T-cell (primary cell): ENCODE measurements at regions of chrX and their contacts with region 1.

Region 1: GRCh38 chrX:19659925-19660324 is 144.6 kb upstream of the MAP3K15 start:
- DNase-seq: no peak
- ATAC-seq: no peak
- H3K4me3 ChIP-seq: no peak overlapping the region
- H3K4me3 Mint-ChIP-seq: no peak overlapping the region
- H3K27ac ChIP-seq: no peak overlapping the region
- H3K27ac Mint-ChIP-seq: peak overlapping the region in 1 of 2 donors; percentile 46
- H3K4me1 ChIP-seq: peaks cover 0 to 6% of the 10 kb centered on the region in 2 experiments
- H3K4me1 Mint-ChIP-seq: peaks cover 26 to 56% (median 35%) of the 10 kb centered on the region in 3 donors
- H3K27me3 ChIP-seq: no peaks in the 10 kb centered on the region
- H3K27me3 Mint-ChIP-seq: no peaks in the 10 kb centered on the region

Region 2: DNA sequence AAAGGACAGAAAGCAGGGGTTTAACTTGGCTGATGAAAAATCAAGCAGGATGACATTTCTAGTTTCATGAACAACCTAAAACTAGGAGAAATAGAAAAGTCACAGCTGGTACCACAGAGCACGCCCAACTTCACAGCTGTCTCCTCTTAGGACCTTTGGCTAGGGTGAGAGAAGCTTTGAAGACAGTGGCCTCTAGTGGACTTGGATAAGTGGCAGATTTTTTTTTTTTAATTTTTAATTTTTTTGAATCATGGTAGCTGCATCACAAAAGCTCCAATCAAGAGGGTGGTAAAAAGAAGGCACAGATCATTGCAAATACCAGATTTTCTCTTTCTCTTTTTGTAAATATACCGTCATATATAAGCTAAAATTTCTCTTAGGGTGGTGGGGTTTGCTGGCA is 124.4 kb before region 1 on chrX:
- CTCF ChIA-PET with region 1: no interaction called
- POLR2A ChIA-PET with region 1: interaction called in 1 of 2 experiments, 28 read pairs
- DNase-seq: no peak
- ATAC-seq: no peak
- H3K4me3 ChIP-seq: no peak overlapping the region
- H3K4me3 Mint-ChIP-seq: no peak overlapping the region
- H3K27ac ChIP-seq: no peak overlapping the region
- H3K27ac Mint-ChIP-seq: no peak overlapping the region
- H3K4me1 ChIP-seq: no peaks in the 10 kb centered on the region
- H3K4me1 Mint-ChIP-seq: no peaks in the 10 kb centered on the region
- H3K27me3 ChIP-seq: no peaks in the 10 kb centered on the region
- H3K27me3 Mint-ChIP-seq: no peaks in the 10 kb centered on the region

Region 3: DNA sequence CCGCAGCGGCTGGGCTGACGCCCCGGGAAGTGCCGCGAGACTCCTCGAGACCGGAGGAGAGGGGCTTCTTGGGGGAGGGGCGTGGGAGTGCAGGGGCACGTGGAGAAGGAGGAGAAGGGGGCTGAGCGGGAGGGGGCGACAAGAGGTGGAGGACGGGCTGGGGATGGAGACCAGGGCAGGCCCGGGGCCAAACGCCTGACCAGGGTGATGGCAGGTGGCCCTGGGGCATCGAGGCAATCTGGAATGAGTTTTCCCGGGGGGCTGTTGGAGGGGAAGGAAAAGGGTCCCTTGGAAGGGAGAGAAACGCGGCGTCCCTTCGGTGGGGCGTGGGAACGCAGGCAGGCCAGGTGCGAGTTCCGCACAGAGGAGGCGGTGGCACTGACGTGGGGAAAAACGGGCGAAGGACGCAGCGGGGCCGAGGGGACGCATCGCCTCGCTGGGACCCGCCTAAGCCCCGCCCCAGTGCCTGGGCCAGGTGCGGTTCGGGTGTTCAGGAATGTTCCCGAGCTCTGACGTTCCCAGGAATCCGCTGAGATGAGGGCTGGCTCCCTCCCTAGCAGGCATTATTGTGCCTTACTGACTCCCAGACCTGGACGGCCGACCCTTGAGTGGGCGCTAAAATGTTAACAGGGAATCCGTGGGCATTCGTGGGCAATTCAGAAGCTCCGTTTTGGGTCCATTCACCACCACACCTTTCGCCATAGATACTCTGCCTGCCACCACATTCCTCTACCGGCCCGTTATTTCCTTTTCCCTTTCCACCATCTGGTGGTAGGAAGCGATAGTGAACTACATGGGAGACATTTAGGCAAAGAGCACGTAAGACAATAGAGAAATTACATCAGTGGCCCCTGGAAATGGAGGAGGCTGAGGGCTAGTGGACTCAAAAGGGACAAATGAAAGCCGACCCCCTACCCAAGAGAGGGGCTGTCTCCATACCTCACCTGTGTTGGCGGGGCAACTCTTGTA is 228.3 kb after region 1 on chrX:
- CTCF ChIA-PET with region 1: interaction called in 1 of 2 experiments, 10 read pairs
- POLR2A ChIA-PET with region 1: no interaction called
- DNase-seq: peak in 26 of 35 experiments; percentile 12 to 75 (median 33)
- ATAC-seq: peak; percentile 36 to 56 (median 46)
- H3K4me3 ChIP-seq: peak overlapping the region; percentile 54 to 60
- H3K4me3 Mint-ChIP-seq: peak overlapping the region; percentile 76 to 77 (median 76)
- H3K27ac ChIP-seq: peak overlapping the region; percentile 52
- H3K27ac Mint-ChIP-seq: peak overlapping the region; percentile 66 to 79
- H3K4me1 ChIP-seq: peaks cover 4 to 29% of the 10 kb centered on the region in 2 experiments
- H3K4me1 Mint-ChIP-seq: peaks cover 36 to 45% (median 44%) of the 10 kb centered on the region in 3 donors
- H3K27me3 ChIP-seq: no peaks in the 10 kb centered on the region
- H3K27me3 Mint-ChIP-seq: no peaks in the 10 kb centered on the region